ENCODE measurements at regions of chrX and their contacts with region 1.

Region 1: DNA sequence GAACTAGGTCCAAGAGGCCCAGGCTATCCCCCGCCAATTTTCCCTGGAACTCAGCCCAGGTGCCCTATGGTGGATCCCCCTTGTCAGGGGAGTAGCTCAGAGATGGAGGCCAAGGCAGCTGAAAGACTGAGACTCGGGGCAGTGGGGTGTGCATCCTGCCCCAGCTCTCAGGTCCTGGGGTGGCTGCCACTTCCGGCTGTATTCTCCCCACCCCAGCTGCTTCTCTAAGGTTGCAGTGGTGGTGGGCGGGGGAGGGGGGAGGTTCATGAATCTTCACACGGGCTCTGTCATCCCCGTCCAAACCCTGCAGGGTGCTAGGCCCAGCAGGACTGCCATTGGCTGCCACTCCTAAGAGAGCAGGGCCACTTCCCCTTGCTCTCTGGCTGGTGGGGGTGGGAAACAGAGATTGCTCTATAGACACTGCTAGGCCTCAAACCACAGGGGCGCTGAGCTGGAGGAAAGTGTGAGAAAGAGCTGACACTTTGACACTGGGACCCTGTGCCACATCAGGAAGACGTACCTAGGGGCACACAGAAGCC is 1.5 kb downstream of the SASH3 start:
- DNase-seq: peak; percentile 23 to 85 (median 77)
- ATAC-seq: peak; percentile 86
- H3K4me3 ChIP-seq: peak overlapping the region; percentile 93
- H3K4me3 Mint-ChIP-seq: peak overlapping the region; percentile 79 to 98 (median 92)
- H3K27ac ChIP-seq: peak overlapping the region; percentile 89
- H3K27ac Mint-ChIP-seq: peak overlapping the region; percentile 78 to 97 (median 93)
- H3K4me1 ChIP-seq: peaks cover 42 to 59% of the 10 kb centered on the region in 2 donors
- H3K4me1 Mint-ChIP-seq: peaks cover 25 to 76% (median 62%) of the 10 kb centered on the region in 7 donors
- H3K27me3 ChIP-seq: no peaks in the 10 kb centered on the region
- H3K27me3 Mint-ChIP-seq: no peaks in the 10 kb centered on the region

Region 2: GRCh38 chrX:129522184-129523078 is 258.8 kb before region 1 on chrX:
- CTCF ChIA-PET with region 1: no interaction called
- POLR2A ChIA-PET with region 1: no interaction called
- intact Hi-C with region 1: no loop called
- DNase-seq: peak in 4 of 9 donors; percentile 8 to 18 (median 14)
- ATAC-seq: peak; percentile 12
- H3K4me3 ChIP-seq: peak overlapping the region; percentile 46
- H3K4me3 Mint-ChIP-seq: peak overlapping the region; percentile 74 to 92 (median 88)
- H3K27ac ChIP-seq: peak overlapping the region; percentile 62
- H3K27ac Mint-ChIP-seq: peak overlapping the region in 8 of 9 donors; percentile 2 to 83 (median 72)
- H3K4me1 ChIP-seq: peaks cover 0 to 7% of the 10 kb centered on the region in 2 donors
- H3K4me1 Mint-ChIP-seq: peaks cover 0 to 18% (median 11%) of the 10 kb centered on the region in 7 donors
- H3K27me3 ChIP-seq: peaks cover 0 to 2% of the 10 kb centered on the region in 2 donors
- H3K27me3 Mint-ChIP-seq: peaks cover 0 to 50% (median 0%) of the 10 kb centered on the region in 5 donors

Region 3: DNA sequence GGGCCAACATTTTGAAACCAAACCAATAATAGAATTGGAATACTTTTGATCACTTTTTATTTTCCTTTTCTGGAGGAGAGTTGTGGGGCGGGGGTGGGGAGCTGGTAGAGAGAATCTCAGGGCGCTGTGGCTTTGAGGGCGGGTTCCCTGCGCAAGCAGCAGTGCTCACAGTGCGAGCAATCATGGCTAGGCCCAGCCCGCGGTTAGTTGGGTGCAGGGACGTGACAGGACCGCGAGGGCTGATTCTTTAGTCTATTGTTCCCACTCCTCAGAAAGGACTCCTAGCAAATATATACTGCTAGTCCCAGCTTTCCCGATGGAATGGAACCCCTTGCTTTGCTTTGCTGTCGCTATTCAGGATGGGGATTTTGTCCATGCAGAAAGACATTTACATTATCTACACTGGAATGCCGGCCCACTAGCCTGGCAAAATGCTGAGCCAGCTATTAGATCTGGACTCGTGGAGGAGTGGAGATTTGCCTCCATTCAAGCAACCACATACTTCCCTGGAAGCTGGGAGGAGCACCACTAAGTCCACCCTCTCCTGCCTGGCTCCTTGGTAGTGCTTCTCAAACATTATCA is 102.5 kb before region 1 on chrX:
- CTCF ChIA-PET with region 1: interaction called, 4 read pairs
- POLR2A ChIA-PET with region 1: interaction called, 12 read pairs
- intact Hi-C with region 1: loop called in 1 of 2 experiments (anchors 1 kb)
- DNase-seq: peak in 7 of 9 donors; percentile 6 to 40 (median 34)
- ATAC-seq: peak; percentile 78
- H3K4me3 ChIP-seq: peak overlapping the region; percentile 53
- H3K4me3 Mint-ChIP-seq: peak overlapping the region; percentile 62 to 85 (median 70)
- H3K27ac ChIP-seq: peak overlapping the region; percentile 38
- H3K27ac Mint-ChIP-seq: peak overlapping the region in 7 of 9 donors; percentile 5 to 91 (median 48)
- H3K4me1 ChIP-seq: peaks cover 5 to 14% of the 10 kb centered on the region in 2 donors
- H3K4me1 Mint-ChIP-seq: peaks cover 10 to 36% (median 23%) of the 10 kb centered on the region in 7 donors
- H3K27me3 ChIP-seq: no peaks in the 10 kb centered on the region
- H3K27me3 Mint-ChIP-seq: peaks cover 0 to 21% (median 0%) of the 10 kb centered on the region in 5 donors

Region 4: GRCh38 chrX:129748305-129748704 is 32.9 kb before region 1 on chrX:
- CTCF ChIA-PET with region 1: no interaction called
- POLR2A ChIA-PET with region 1: interaction called, 167 read pairs
- intact Hi-C with region 1: loop called (anchors 5 kb)
- DNase-seq: no peak
- ATAC-seq: no peak
- H3K4me3 ChIP-seq: no peak overlapping the region
- H3K4me3 Mint-ChIP-seq: no peak overlapping the region
- H3K27ac ChIP-seq: no peak overlapping the region
- H3K27ac Mint-ChIP-seq: no peak overlapping the region
- H3K4me1 ChIP-seq: peaks cover 14 to 19% of the 10 kb centered on the region in 2 donors
- H3K4me1 Mint-ChIP-seq: peaks cover 20 to 42% (median 32%) of the 10 kb centered on the region in 7 donors
- H3K27me3 ChIP-seq: no peaks in the 10 kb centered on the region
- H3K27me3 Mint-ChIP-seq: no peaks in the 10 kb centered on the region

Region 5: GRCh38 chrX:129798888-129799287 is 17.7 kb after region 1 on chrX:
- CTCF ChIA-PET with region 1: interaction called, 3 read pairs
- POLR2A ChIA-PET with region 1: interaction called, 85 read pairs
- intact Hi-C with region 1: loop called in 1 of 2 experiments (anchors 2 kb)
- DNase-seq: no peak
- ATAC-seq: peak; percentile 61
- H3K4me3 ChIP-seq: no peak overlapping the region
- H3K4me3 Mint-ChIP-seq: no peak overlapping the region
- H3K27ac ChIP-seq: no peak overlapping the region
- H3K27ac Mint-ChIP-seq: peak overlapping the region in 7 of 9 donors; percentile 37 to 69 (median 53)
- H3K4me1 ChIP-seq: no peaks in the 10 kb centered on the region
- H3K4me1 Mint-ChIP-seq: peaks cover 6 to 27% (median 19%) of the 10 kb centered on the region in 7 donors
- H3K27me3 ChIP-seq: no peaks in the 10 kb centered on the region
- H3K27me3 Mint-ChIP-seq: no peaks in the 10 kb centered on the region

Region 6: DNA sequence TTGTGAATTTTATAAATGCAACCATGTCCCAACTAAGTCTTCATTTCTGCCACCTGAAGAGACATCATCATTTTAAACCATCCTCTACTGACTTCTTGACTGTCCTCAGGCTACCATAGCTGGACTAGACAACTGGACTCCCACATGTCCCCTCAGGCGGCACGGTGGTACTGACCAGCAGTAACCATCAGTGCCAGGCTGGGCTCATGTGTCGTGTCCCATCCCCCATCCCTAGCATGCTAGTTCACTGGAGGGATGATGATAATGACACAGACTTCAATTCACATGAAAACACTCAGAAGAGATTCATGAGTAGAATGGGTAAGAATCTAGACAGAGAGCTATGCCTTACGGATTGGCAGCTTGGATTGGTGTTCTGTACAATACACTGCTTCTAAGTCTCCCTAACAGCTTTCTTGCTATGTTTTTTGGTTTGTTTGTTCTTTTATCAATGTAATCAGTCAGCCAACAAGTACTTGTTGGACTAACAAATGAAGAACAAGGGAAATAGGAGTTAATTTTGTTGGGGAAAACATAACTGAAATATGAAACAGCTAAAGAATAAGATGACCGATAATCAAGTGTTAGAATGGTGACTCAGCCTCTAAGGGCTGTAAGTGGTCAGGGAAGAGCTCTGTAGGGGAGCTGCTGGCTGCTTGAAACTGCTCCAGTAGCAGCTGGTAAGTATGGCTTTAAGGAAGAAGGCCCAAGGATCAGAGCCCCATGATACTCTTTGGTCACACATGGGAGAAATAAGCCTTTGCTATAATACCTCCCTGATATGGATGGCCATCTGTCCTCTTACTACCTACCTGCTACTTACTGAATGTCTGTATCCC is 52.2 kb after region 1 on chrX:
- CTCF ChIA-PET with region 1: no interaction called
- POLR2A ChIA-PET with region 1: no interaction called
- intact Hi-C with region 1: no loop called
- DNase-seq: no peak
- ATAC-seq: no peak
- H3K4me3 ChIP-seq: no peak overlapping the region
- H3K4me3 Mint-ChIP-seq: no peak overlapping the region
- H3K27ac ChIP-seq: no peak overlapping the region
- H3K27ac Mint-ChIP-seq: no peak overlapping the region
- H3K4me1 ChIP-seq: no peaks in the 10 kb centered on the region
- H3K4me1 Mint-ChIP-seq: no peaks in the 10 kb centered on the region
- H3K27me3 ChIP-seq: no peaks in the 10 kb centered on the region
- H3K27me3 Mint-ChIP-seq: no peaks in the 10 kb centered on the region

Region 7: DNA sequence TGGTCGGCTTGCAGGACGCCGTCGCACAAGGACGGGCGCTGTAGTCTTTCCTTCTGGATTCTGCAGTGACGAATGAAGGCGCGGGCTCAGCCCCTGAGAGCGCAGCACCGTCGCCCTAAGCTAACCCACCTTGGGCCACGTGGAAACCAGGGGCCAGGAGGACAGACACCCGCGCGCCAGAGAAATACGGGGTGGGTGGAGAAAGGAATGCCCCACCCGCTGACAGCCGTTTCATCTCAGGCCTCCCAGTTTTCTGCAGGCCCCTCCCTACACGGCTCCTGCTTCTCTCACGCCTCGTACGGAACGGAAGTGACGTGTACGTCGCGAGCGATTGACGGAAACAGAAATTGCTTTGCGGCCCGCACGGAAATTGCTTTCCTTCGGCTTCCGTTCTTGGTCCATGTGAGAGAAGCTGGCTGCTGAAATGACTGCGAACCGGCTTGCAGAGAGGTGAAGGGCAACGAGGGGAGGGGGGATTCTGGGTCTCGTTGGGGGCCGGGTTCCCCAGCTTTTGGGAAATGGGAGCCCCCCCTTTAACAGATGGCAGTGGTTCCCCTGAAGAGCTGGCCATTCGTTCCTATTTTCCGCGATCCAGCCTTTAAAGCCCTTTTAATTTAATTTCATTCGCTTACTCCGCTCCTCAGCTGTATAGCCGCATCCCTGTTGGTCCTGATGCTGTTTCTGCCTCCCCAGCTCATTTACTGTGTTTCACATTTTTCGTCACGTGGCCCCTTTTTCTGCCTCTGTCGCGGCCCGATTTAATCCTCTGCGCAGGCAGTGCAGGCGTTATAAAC is 124.8 kb after region 1 on chrX and contains the start of gene UTP14A:
- CTCF ChIA-PET with region 1: no interaction called
- POLR2A ChIA-PET with region 1: interaction called, 3 read pairs
- intact Hi-C with region 1: loop called (anchors 5 kb)
- DNase-seq: peak; percentile 44 to 86 (median 78)
- ATAC-seq: peak; percentile 98
- H3K4me3 ChIP-seq: peak within 1 kb of the TSS; percentile 85
- H3K4me3 Mint-ChIP-seq: peak within 1 kb of the TSS; percentile 85 to 97 (median 92)
- H3K27ac ChIP-seq: peak within 1 kb of the TSS; percentile 76
- H3K27ac Mint-ChIP-seq: peak within 1 kb of the TSS; percentile 81 to 95 (median 90)
- H3K4me1 ChIP-seq: peaks cover 3 to 8% of the 10 kb centered on the region in 2 donors
- H3K4me1 Mint-ChIP-seq: peaks cover 0 to 17% (median 4%) of the 10 kb centered on the region in 7 donors
- H3K27me3 ChIP-seq: no peaks in the 10 kb centered on the region
- H3K27me3 Mint-ChIP-seq: no peaks in the 10 kb centered on the region
- total RNA-seq, gene UTP14A: 11.3 to 28.6 (median 22.4) TPM

Region 8: DNA sequence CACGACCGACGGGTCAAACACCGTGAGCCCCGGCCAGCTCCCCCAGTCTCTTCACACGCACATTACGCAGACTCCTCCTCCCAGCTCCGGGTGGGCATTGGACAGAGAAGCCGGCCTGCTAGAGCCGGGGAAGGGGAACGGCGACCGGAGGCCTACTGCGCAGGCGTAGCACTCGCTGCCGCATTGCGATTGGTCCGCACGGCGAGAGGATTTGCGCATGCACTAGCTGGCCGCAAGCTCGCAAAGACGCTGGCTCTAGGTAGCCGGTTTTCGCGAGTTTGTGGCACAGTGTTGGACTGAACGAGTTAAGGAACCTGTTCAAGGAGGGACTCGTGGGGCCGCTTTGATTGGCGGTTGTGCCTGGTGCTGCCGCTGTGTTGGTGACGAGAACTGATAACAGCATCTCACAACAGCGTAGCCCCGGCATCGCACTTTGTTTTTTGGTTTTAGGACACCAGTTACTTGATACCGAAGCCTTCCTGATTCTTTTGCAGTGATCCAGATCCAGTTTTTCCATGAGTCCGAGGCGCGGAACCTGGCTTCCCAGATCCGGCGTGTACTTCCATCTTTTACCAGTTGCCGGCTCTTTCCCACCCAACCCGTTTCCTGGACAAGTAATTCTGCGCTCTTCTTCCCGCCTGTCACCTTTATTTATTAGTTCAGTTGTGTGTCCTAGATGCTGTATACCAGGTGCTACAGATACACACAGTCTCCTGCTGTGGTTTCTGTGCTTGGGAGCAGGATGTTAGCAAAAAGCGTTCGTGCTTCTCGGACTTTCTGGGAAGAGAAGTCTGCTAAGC is 384.7 kb after region 1 on chrX and contains the start of gene AIFM1:
- CTCF ChIA-PET with region 1: no interaction called
- POLR2A ChIA-PET with region 1: no interaction called
- intact Hi-C with region 1: loop called in 1 of 2 experiments (anchors 5 kb)
- DNase-seq: peak; percentile 68 to 90 (median 84)
- ATAC-seq: peak; percentile 94
- H3K4me3 ChIP-seq: peak within 1 kb of the TSS; percentile 87
- H3K4me3 Mint-ChIP-seq: peak within 1 kb of the TSS; percentile 84 to 98 (median 90)
- H3K27ac ChIP-seq: peak within 1 kb of the TSS; percentile 78
- H3K27ac Mint-ChIP-seq: peak within 1 kb of the TSS; percentile 85 to 96 (median 92)
- H3K4me1 ChIP-seq: peaks cover 8 to 10% of the 10 kb centered on the region in 2 donors
- H3K4me1 Mint-ChIP-seq: peaks cover 6 to 41% (median 32%) of the 10 kb centered on the region in 7 donors
- H3K27me3 ChIP-seq: no peaks in the 10 kb centered on the region
- H3K27me3 Mint-ChIP-seq: no peaks in the 10 kb centered on the region
- total RNA-seq, gene AIFM1: 11.6 to 35.8 (median 21.1) TPM

Measured in naive thymus-derived CD4-positive, alpha-beta T cell (primary cell).